ENCODE measurements at regions of chr2 and their contacts with region 1.

Region 1: DNA sequence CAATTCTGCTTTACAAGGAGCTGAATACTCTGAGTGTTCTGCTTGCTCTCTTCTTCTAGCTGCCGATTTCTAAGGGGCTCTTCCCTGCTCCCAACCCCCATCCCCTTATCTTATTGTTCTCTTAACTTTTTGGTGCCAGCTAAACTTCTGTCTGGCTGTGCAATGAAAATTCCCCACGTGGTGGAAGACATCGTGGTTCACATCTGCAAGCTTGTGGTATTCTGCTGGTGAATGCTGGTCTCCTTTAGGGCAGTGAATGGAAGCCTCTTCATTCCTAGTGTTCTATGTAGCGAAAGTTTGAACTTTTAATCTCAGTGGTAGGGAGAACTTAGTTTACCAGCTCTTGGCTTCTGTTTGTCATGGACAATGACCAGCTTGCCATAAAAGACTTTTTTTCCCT is 406.0 kb upstream of the ZEB2 start:
- DNase-seq: no peak
- H3K4me3 ChIP-seq: no peak overlapping the region
- H3K27ac ChIP-seq: no peak overlapping the region
- H3K4me1 ChIP-seq: no peaks in the 10 kb centered on the region
- CTCF ChIP-seq: no peak

Region 2: DNA sequence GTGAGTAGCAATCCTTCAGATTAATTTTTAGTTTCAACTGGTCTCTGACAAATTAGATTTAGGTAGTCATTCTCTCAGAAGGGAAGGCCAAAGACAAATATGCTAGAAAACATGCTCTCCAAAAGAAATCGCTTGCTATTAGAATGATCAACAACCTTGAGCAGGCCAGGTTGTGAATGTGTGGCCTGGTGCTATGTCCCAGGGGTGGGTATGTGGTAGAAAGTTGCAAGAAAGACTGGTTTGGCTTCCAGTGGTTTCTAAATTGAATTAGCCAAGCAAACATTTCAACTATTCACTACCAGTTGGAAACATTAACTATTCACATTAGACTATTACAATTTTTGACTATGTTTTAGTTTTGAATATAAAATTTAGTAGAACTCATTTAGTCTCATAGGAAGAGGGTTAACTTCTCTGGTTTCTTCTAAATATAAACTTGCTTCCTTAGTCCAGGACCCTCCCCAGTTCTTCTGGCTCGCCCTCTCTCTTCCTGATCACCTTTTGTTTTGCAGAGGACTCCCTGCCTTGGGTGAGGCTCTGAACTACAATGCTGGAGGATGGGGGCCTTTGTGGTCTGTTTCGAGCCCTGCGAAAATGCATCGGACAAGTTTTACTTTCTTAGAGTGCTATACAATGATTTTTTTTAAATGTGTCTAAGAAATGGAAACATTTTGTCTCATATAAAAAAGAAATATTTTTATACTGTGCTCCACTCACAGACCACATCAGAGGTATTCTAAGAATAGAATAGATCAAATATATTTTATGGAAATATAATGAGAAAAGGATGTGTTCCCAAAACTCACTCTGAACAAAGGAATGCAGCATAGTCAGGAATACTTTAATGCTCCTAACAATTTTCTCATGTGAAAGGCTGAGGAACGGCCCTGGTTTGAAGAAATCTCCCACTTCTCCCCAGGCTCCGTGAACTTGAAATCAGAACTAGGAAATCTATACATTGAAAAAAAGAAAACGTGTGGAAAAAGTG is 31.0 kb before region 1 on chr2:
- CTCF ChIA-PET with region 1: no interaction called
- POLR2A ChIA-PET with region 1: no interaction called
- intact Hi-C with region 1: no loop called
- DNase-seq: no peak
- H3K4me3 ChIP-seq: no peak overlapping the region
- H3K27ac ChIP-seq: no peak overlapping the region
- H3K4me1 ChIP-seq: no peaks in the 10 kb centered on the region
- CTCF ChIP-seq: no peak

Region 3: DNA sequence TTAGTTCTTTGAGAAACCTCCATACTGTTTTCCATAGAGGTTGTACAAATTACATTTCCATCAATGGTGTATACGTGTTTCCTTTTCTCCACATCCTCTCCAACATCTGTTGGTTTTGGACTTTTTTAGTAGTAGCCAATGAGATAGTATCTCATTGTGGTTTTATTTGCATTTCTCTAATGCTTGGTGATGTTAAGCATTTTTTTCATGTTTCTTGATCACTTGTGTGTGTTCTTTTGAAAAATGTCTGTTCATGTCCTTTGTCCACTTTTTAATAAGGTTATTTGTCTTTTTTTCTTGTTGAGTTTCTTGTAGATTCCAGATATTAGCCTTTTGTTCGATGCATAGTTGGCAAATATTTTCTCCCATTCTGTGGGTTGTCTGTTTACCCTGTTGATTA is 13.7 kb before region 1 on chr2:
- CTCF ChIA-PET with region 1: no interaction called
- POLR2A ChIA-PET with region 1: interaction called, 10 read pairs
- intact Hi-C with region 1: no loop called
- DNase-seq: no peak
- H3K4me3 ChIP-seq: no peak overlapping the region
- H3K27ac ChIP-seq: no peak overlapping the region
- H3K4me1 ChIP-seq: no peaks in the 10 kb centered on the region
- CTCF ChIP-seq: no peak

Measured in OCI-LY7 (cell line).